ENCODE measurements at regions of chr21 and their contacts with region 1.

Region 1: DNA sequence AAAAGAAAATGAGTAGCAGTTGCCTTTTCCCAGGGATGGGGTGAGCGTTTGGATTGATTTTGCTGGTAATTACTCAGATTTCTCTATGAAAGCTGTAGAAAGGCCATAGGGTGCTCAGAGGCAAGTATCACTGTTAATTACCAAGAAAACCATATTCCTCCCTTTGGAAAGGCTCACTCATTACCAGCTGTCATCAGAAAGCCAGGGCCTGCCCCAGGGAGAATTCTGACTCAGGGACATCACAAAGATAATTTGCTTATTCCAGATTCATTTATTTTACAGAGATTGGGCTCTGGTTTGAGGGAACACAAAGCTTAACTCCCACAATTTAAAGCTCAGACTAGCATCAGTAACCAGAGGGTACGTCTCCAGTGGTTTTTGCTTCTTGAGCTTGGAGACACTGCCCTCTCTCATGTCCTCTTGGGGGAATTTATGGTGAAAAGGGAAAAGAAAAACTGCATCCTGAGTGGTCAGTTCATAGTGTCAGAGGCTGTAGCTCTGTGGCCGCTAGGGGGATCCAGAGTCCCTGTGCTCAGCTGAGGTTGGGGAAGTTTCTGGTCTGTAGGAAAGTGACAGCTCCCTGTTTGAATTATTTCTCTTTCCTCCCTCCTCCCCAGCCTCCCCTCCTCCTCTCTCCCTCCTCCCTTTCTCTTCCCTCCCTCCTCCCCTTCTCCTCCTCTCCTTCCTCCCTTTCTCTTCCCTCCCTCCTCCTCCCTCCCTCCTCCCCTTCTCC is 204.3 kb downstream of the KCNJ6 start:
- H3K4me3 ChIP-seq: no peak overlapping the region
- H3K27ac ChIP-seq: peak overlapping the region; percentile 33; the same call in 1 of the 2 replicates
- H3K4me1 ChIP-seq: peaks cover 19% of the 10 kb centered on the region
- CTCF ChIP-seq: peak; percentile 73

Region 2: DNA sequence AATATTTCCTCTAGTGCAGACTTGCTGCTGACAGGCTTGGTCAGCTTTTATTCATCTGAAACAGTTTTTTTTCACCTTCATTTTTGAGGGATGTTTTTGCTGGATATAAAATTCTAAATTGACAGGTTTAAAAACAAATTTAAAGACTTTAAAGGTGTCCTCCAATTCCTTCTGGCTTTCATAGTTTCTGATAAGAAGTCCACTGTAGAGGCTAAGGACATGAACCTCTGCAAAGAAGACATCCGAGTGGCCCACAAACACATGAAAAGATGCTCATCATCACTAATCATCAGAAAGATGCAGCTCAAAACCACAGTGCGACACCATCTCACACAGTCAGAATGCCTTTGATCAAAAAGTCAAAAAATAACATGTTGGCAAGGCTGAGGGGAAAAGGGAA is 387.4 kb before region 1 on chr21:
- CTCF ChIA-PET with region 1: no interaction called
- POLR2A ChIA-PET with region 1: no interaction called
- H3K4me3 ChIP-seq: no peak overlapping the region
- H3K27ac ChIP-seq: no peak overlapping the region
- H3K4me1 ChIP-seq: no peaks in the 10 kb centered on the region
- CTCF ChIP-seq: no peak

Region 3: DNA sequence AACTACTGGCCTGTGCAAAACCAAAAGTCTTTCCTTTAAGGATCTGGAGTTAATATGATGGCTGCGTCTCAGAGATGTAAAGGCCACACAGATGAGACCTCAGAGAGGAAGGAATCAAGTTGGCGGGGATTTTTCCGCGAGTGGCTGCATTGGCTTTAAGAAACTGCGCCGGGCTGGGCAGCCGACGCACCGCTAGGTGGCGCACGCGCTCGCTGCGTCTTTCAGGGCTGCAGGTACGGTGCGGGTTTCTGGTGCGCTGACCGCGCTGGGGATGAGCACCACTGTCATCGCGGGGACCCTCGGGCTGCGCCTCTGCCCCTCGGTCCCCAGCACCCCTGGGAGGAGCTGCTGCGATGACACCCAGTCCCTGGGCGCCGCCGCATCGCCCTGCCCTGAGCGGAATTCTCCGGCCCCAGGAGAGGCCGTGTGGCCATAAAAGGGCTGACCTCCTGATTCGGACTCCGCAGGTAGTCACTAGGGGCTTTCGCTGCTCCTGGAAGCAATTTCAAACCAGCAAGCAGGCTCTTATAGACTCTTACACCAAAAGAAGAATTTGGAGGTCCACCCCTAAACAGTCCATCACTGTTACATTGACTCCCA is 36.7 kb before region 1 on chr21:
- CTCF ChIA-PET with region 1: interaction called, 10 read pairs
- POLR2A ChIA-PET with region 1: no interaction called
- H3K4me3 ChIP-seq: no peak overlapping the region
- H3K27ac ChIP-seq: no peak overlapping the region
- H3K4me1 ChIP-seq: no peaks in the 10 kb centered on the region
- CTCF ChIP-seq: peak; percentile 93

Region 4: GRCh38 chr21:37695111-37695510 is 16.9 kb before region 1 on chr21:
- CTCF ChIA-PET with region 1: interaction called, 16 read pairs
- POLR2A ChIA-PET with region 1: no interaction called
- H3K4me3 ChIP-seq: no peak overlapping the region
- H3K27ac ChIP-seq: no peak overlapping the region
- H3K4me1 ChIP-seq: no peaks in the 10 kb centered on the region
- CTCF ChIP-seq: no peak

Region 5: DNA sequence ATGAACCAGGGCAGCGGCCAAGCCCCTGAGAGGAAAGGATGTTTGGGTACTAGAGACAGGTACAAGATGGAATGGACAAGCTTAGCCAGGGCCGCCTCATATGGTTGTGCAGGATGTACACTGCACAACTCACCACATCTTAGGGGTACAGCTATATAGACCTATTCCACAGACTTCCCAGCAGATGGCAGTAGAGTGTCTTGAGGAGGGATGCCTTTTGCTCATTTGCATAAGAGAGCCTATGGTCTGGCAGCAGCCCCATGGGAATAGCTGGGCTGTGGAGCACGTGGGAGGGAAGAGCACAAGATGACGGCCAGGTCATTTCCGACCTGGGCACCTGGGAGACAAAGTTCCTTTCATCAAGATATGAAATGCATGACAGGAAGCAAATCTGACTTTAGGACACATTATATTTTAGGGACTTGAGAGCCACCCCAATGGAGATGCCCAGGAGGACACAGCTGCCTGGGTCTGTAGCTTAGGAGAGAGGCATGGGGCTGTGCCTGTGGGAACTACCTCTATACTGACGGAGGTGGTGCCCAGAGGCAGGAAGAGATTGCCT is 11.3 kb before region 1 on chr21:
- CTCF ChIA-PET with region 1: interaction called, 16 read pairs
- POLR2A ChIA-PET with region 1: no interaction called
- H3K4me3 ChIP-seq: no peak overlapping the region
- H3K27ac ChIP-seq: no peak overlapping the region
- H3K4me1 ChIP-seq: no peaks in the 10 kb centered on the region
- CTCF ChIP-seq: peak; percentile 76

Region 6: GRCh38 chr21:37724201-37724600 is 12.2 kb after region 1 on chr21:
- CTCF ChIA-PET with region 1: interaction called, 11 read pairs
- POLR2A ChIA-PET with region 1: no interaction called
- H3K4me3 ChIP-seq: no peak overlapping the region
- H3K27ac ChIP-seq: no peak overlapping the region
- H3K4me1 ChIP-seq: no peaks in the 10 kb centered on the region
- CTCF ChIP-seq: no peak

Region 7: DNA sequence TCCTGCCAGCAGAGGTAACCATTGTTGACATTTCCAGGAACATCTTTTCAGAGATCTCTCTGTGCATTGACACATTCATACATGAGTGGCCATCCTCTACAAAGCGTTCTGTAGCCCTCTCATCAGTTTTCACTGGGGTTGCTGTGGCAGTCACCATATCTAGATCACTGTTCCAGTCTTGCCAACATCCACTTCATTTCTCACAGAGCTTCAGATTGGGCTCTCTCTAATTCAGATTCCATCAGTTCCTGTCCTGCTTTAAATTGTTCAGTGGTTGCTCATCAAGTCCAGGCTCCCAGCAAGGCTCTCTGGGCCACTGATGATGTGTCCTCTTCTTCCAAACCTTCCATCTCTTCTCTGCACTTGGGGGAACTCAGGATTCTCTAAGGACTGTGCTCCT is 30.5 kb after region 1 on chr21:
- CTCF ChIA-PET with region 1: interaction called, 13 read pairs
- POLR2A ChIA-PET with region 1: no interaction called
- H3K4me3 ChIP-seq: no peak overlapping the region
- H3K27ac ChIP-seq: no peak overlapping the region
- H3K4me1 ChIP-seq: no peaks in the 10 kb centered on the region; the same call in 1 of the 2 replicates
- CTCF ChIP-seq: no peak

Region 8: GRCh38 chr21:37916310-37917051 is 204.5 kb after region 1 on chr21 and contains the start of gene KCNJ6:
- CTCF ChIA-PET with region 1: interaction called, 15 read pairs
- POLR2A ChIA-PET with region 1: no interaction called
- H3K4me3 ChIP-seq: peak within 1 kb of the TSS; percentile 32
- H3K27ac ChIP-seq: no peak within 1 kb of the TSS; the same call in 1 of the 2 replicates
- H3K4me1 ChIP-seq: peaks cover 11% of the 10 kb centered on the region
- CTCF ChIP-seq: peak; percentile 72

Measured in HEK293 (cell line).